ENCODE measurements at regions of chr3 and their contacts with region 1.

Region 1: GRCh38 chr3:188796122-188796631 is 375.6 kb upstream of the TPRG1 start:
- DNase-seq: no peak
- H3K27ac ChIP-seq: no peak overlapping the region
- CTCF ChIP-seq: no peak

Region 2: DNA sequence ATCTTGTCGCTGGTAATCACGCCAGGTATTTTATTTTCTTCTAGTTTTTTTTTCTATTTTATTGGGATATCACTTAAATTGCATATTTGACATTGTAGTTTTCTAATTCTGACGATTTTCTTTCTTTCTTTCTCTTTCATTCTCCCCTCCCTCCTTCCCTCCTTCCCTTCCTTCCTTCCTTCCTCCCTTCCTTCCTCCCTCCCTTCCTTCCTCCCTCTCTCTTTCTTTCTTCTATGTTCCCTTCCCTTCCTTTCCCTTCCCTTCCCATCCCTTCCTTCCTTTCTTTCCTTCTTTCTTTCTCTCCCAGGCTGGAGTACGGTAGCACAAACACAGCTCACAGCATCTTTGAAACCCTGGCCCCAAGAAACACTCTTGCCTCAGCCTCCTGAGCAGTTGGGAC is 950.4 kb before region 1 on chr3:
- CTCF ChIA-PET with region 1: no interaction called
- POLR2A ChIA-PET with region 1: interaction called, 11 read pairs
- DNase-seq: no peak
- H3K27ac ChIP-seq: no peak overlapping the region
- CTCF ChIP-seq: no peak

Region 3: GRCh38 chr3:188712248-188712924 is 83.8 kb before region 1 on chr3:
- CTCF ChIA-PET with region 1: no interaction called
- POLR2A ChIA-PET with region 1: no interaction called
- DNase-seq: no peak
- H3K27ac ChIP-seq: no peak overlapping the region
- CTCF ChIP-seq: no peak

Region 4: DNA sequence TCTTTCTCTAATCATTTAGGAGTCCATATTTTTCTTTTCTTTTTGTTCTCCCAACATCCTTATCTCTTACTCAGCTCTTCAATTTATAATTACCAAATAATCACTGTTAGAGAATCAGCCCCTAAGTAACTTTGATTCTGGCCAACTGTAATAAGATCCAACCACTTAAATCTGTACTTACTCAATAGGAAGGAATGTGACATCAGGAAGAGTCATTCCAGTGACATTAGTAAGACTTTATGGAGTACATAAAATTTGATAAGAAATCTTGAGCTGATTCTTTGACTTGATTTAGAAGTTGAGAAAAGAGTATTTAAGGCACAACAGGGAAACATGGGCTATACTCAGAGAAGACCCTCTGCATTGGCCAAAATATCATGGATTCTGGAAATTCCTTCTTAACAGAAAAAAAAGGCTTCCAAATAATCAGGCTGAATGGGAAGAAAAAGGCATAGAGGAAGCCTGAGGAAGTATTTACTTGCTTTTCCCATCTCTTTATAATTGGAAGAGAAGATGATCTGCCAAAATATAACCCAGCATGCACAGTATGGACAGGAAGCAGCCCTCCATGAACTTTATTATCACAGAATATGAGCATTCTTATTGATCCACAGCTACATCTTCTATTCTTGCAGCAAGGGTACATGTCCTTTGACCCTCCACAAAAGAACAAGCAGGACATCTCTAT is 85.9 kb after region 1 on chr3:
- CTCF ChIA-PET with region 1: no interaction called
- POLR2A ChIA-PET with region 1: no interaction called
- DNase-seq: peak; percentile 75
- H3K27ac ChIP-seq: peak overlapping the region; percentile 67
- CTCF ChIP-seq: no peak